ENCODE measurements at regions of chr4 and their contacts with region 1.

Region 1: DNA sequence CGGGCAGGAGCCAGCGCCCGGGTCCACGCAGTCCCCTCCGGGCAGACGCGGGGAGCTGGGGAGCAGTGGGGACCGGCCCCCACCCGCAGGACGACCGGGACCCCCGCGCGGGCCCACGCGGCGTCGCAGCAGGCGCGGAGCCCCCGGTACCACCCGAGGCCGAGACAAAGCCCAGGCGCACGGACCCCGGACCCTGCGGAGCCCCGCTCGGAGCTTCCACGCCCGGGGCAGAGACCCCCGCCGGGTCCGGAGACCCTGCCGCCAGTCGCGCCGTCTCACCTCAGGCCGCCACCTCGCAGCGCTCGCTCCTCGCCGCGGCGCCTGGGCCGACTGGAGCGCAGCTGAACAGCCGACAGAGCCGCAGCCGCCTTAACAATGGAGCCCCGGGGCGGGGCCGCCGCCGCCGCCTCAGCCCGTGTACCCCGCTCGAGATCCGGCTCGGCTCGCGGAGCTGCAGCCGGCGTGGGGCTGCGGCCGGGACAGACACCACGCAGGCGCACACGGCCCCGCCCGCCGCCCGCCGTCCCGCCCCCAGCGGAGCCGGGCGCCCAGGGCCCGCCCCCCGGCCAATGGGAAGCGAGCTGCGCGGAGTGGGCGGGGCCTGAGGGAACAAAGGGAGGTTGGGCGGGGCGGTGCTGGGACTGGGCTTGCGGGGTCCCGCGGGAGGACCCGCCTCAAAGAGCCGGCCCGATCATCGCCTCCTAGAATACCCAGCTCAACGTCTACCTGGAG is at the start of gene AFAP1:
- DNase-seq: peak; percentile 83
- ATAC-seq: peak; percentile 79
- H3K4me3 ChIP-seq: peak within 1 kb of the TSS; percentile 93
- H3K27ac ChIP-seq: peak within 1 kb of the TSS; percentile 51
- H3K4me1 ChIP-seq: peaks cover 43% of the 10 kb centered on the region
- H3K27me3 ChIP-seq: no peaks in the 10 kb centered on the region
- CTCF ChIP-seq: no peak
- total RNA-seq, gene AFAP1: 42.1 and 51.4 TPM in 2 replicates

Region 2: DNA sequence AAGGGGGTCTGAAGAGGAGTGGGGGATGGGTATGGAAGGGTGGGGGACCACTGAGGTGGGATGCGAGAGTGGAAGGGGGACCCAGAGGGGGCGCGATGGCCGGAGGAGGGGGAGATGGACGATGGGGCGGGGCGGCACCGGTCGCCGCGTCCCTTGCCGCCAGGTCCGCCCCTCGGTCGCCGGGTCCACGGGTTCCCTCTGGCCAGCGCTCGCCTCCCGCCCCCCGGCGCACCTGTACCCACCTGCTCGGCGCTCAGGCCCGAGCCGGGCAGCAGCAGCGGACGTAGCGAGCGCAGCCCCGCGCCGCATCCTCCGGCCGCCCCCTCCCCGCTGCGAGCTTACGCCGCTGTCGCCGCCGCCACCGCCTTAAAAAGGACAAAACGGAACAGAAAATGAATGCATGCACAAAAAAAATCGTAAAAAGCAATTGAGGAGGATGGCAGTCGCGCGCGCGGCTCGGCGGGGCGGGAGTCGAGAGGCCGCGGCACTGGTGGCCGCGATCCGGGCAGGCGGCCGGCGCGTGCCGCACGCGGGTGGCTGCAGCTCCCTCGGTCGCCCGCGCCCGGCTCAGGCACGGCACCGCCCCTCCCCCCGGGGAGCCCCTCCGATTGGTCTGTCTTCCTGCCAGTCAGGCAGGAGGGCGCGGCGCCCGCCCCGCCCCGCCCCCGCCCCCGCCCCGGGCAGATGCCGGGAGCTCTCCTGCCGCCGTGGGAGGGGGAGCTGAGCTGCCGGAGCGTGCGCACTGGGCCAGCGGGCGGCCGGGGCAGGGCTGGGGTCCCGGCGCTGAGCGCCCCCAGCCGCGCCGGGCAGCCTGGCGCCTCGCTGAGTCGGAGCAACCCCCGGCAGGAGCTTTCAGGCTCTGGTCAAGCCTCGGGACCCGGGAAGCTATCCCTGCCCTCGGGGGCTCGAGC is 1739.3 kb before region 1 on chr4 and contains the start of gene JAKMIP1:
- CTCF ChIA-PET with region 1: no interaction called
- POLR2A ChIA-PET with region 1: interaction called, 13 read pairs
- intact Hi-C with region 1: no loop called
- DNase-seq: peak; percentile 67
- ATAC-seq: peak; percentile 72
- H3K4me3 ChIP-seq: peak within 1 kb of the TSS; percentile 67
- H3K27ac ChIP-seq: no peak within 1 kb of the TSS
- H3K4me1 ChIP-seq: 0 out of 2 replicates have a peak, but pooled peaks cover 3% of the 10 kb centered on the region
- H3K27me3 ChIP-seq: peaks cover 22% of the 10 kb centered on the region
- CTCF ChIP-seq: no peak
- total RNA-seq, gene JAKMIP1: 0.04 and 0.75 TPM in 2 replicates

Region 3: GRCh38 chr4:7630568-7631287 is 308.8 kb before region 1 on chr4:
- CTCF ChIA-PET with region 1: no interaction called
- POLR2A ChIA-PET with region 1: interaction called, 11 read pairs
- intact Hi-C with region 1: no loop called
- DNase-seq: peak; percentile 94
- ATAC-seq: peak; percentile 90
- H3K4me3 ChIP-seq: peak overlapping the region; percentile 55
- H3K27ac ChIP-seq: peak overlapping the region; percentile 99
- H3K4me1 ChIP-seq: peaks cover 22% of the 10 kb centered on the region
- H3K27me3 ChIP-seq: no peaks in the 10 kb centered on the region
- CTCF ChIP-seq: no peak; the same call in 1 of the 2 replicates

Region 4: DNA sequence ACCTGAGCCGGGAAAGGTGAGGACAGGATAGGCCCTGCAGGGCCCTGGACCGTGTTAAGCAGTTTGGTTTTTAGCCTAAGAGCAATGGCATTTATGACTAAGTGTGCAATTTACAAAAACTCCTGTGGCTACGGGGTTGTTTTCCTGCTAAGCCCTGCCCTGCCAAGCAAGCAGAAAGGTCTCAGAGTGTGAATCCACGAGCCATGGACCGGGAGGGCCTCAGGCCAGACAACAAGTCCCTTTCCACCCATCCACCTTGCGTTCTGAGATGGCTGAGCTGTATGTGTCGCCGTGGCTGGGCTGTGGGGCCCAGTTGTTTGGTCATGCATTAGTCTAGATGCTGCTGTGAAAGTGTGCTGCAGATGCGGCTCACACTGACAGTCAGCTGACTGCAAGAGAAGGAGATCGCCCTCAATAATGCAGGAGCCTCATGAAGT is 34.0 kb after region 1 on chr4:
- CTCF ChIA-PET with region 1: no interaction called
- POLR2A ChIA-PET with region 1: no interaction called
- intact Hi-C with region 1: loop called (anchors 2 kb)
- DNase-seq: peak; percentile 85
- ATAC-seq: peak; percentile 40
- H3K4me3 ChIP-seq: no peak overlapping the region
- H3K27ac ChIP-seq: peak overlapping the region; percentile 100
- H3K4me1 ChIP-seq: peaks cover 57% of the 10 kb centered on the region
- H3K27me3 ChIP-seq: no peaks in the 10 kb centered on the region
- CTCF ChIP-seq: no peak

Measured in PC-3 (cell line).